WTC11 (cell line): ENCODE measurements at regions of chr1 and their contacts with region 1.

Region 1: DNA sequence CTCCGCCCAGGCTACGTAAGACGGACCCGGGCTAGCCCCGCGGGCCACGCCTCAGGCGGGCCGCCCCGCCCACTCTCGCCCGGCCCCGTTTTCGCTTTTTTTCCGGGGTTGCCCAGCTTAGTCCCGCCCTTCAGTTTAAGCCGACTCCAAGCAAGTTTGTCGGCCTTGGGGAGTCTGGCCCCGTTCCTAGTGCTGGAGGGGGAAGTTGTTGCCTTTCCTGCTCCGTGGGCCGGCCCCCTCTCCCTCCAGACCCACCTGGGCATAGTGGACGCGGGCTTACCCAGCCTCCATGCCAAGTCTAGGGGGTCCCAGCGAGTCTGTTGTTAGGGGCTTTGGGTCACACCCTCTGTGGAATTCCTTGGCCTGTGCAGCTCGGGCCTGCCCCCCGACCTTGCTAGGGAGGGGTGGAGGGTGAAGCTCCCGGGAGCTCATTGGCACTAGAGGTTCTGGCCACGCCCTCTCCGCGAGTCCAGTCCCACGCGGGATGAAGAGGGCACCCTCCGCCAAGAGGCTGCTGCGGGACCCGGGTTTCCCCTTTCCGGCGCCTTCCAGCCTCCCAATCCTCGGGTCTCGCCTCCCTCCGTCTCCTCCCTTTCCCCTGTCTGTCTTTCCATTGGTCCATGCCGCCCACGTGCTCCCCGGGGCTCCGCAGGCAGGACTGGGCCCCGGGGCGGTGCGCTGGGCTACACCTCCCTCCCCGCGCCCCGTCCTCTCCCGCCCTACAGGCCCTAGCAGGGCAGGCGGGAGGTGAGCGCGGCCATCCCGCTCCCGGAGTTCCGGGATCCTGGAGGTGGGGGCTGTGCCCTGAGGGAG is 3.3 kb downstream of the RUSC1 start:
- DNase-seq: peak; percentile 92
- ATAC-seq: peak; percentile 63
- H3K4me3 Mint-ChIP-seq: peak overlapping the region; percentile 91
- H3K27ac Mint-ChIP-seq: peak overlapping the region; percentile 65; the same call in 1 of the 2 replicates
- H3K4me1 Mint-ChIP-seq: peaks cover 38% of the 10 kb centered on the region
- H3K27me3 Mint-ChIP-seq: peaks cover 6% of the 10 kb centered on the region
- CTCF ChIP-seq: no peak

Region 2: GRCh38 chr1:154652893-154653292 is 671.1 kb before region 1 on chr1:
- CTCF ChIA-PET with region 1: no interaction called
- POLR2A ChIA-PET with region 1: no interaction called
- DNase-seq: no peak
- ATAC-seq: no peak
- H3K4me3 Mint-ChIP-seq: no peak overlapping the region
- H3K27ac Mint-ChIP-seq: no peak overlapping the region
- H3K4me1 Mint-ChIP-seq: peaks cover 7% of the 10 kb centered on the region
- H3K27me3 Mint-ChIP-seq: no peaks in the 10 kb centered on the region
- CTCF ChIP-seq: no peak

Region 3: GRCh38 chr1:155208541-155209311 is 115.3 kb before region 1 on chr1 and contains the start of gene MTX1:
- CTCF ChIA-PET with region 1: interaction called, 24 read pairs
- POLR2A ChIA-PET with region 1: interaction called, 4 read pairs
- DNase-seq: peak; percentile 88
- ATAC-seq: peak; percentile 65
- H3K4me3 Mint-ChIP-seq: peak within 1 kb of the TSS; percentile 88
- H3K27ac Mint-ChIP-seq: peak within 1 kb of the TSS; percentile 89
- H3K4me1 Mint-ChIP-seq: peaks cover 19% of the 10 kb centered on the region
- H3K27me3 Mint-ChIP-seq: peaks cover 7% of the 10 kb centered on the region; the same call in 1 of the 2 replicates
- CTCF ChIP-seq: no peak
- total RNA-seq, gene MTX1: 57.5 to 62.8 TPM (median 60.4 TPM) in 3 replicates

Region 4: GRCh38 chr1:155227261-155228095 is 96.5 kb before region 1 on chr1:
- CTCF ChIA-PET with region 1: interaction called, 15 read pairs
- POLR2A ChIA-PET with region 1: no interaction called
- DNase-seq: peak; percentile 97
- ATAC-seq: peak; percentile 96
- H3K4me3 Mint-ChIP-seq: peak overlapping the region; percentile 92
- H3K27ac Mint-ChIP-seq: peak overlapping the region; percentile 97
- H3K4me1 Mint-ChIP-seq: peaks cover 22% of the 10 kb centered on the region
- H3K27me3 Mint-ChIP-seq: peaks cover 29% of the 10 kb centered on the region
- CTCF ChIP-seq: no peak

Region 5: DNA sequence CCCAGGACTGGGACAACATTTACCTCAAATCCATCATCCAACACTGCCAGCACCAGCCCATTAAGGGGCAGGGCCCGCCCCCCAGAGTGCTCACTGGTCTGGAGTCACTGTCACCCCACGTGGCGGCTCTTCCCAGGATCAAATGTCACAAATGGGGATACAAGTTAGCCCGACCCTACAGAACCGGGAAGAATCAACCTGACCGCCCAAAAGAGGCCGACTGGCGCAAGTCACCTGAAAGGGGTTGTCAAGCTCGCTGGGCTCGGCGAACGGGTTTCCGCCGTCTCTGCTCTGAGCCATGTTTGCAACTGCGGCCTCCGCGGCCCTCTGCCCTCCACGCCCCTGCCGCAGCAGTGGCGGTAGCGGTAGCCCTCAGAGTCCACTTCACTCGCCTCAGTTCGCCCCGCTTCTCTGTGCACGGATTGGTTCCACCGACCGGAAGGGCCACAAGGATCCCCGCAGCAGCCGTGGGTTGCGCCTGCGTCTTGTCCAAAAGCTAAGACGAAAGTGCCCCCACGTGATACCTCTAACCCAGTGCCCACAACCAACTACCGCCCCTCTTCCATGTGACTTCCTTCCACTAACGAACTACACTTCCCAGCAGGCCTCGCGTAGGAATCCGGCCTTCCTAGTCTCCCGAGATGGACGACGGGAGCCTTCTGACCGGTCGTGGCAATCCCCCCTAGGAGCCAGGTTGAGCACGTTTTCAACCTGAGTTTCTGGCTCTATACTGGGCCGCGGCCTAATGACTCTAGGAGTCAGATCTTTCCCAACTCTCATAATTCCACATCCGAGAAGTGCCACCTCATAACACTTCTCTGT is 61.9 kb before region 1 on chr1 and contains the start of gene SCAMP3:
- CTCF ChIA-PET with region 1: interaction called, 13 read pairs
- POLR2A ChIA-PET with region 1: interaction called, 3 read pairs
- DNase-seq: peak; percentile 92
- ATAC-seq: peak; percentile 94
- H3K4me3 Mint-ChIP-seq: peak within 1 kb of the TSS; percentile 96
- H3K27ac Mint-ChIP-seq: peak within 1 kb of the TSS; percentile 97
- H3K4me1 Mint-ChIP-seq: peaks cover 14% of the 10 kb centered on the region
- H3K27me3 Mint-ChIP-seq: no peaks in the 10 kb centered on the region
- CTCF ChIP-seq: no peak
- total RNA-seq, gene SCAMP3: 50.0 to 58.8 TPM (median 52.2 TPM) in 3 replicates

Region 6: GRCh38 chr1:155277070-155277895 is 46.7 kb before region 1 on chr1 and contains the start of gene HCN3:
- CTCF ChIA-PET with region 1: interaction called, 75 read pairs
- POLR2A ChIA-PET with region 1: interaction called, 13 read pairs
- DNase-seq: peak; percentile 100
- ATAC-seq: peak; percentile 68
- H3K4me3 Mint-ChIP-seq: peak within 1 kb of the TSS; percentile 68
- H3K27ac Mint-ChIP-seq: no peak within 1 kb of the TSS
- H3K4me1 Mint-ChIP-seq: peaks cover 32% of the 10 kb centered on the region
- H3K27me3 Mint-ChIP-seq: peaks cover 18% of the 10 kb centered on the region
- CTCF ChIP-seq: peak; percentile 35; the same call in 1 of the 2 replicates
- total RNA-seq, gene HCN3: 5.9 to 7.3 TPM (median 6.3 TPM) in 3 replicates

Region 7: DNA sequence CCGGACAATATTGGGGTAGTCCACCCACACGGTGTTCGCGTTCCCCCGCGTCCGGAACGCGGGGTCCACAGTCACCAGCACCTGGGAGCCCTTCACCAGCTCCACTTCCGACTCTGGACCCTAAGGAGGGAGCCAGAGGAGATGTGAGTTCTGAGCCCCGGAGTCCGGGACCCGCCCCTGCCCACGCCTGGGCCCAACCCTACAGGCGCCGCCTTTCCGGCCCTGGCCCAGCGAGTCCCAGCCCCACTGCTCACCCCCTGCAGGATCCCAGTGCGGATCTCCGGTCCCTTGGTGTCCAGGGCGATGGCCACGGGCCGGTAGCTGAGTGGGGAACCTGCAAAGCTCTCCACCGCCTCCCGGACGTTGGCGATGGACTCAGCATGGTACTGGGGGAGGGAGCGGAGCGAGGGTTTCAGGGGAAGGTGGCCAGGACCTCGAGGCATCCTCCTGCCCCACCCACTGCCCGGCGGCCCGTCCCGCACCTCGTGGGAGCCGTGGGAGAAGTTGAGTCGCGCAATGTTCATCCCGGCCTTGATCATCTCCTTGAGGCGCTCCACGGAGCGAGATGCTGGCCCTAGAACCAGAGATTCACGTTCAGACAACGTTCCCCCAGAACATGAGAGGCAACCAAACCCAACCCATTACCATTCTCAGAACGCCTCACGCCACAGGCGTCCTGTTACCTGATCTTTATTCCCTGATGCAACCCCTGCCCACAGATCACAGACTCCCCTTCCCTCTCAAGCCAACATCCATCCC is 28.6 kb before region 1 on chr1:
- CTCF ChIA-PET with region 1: interaction called, 12 read pairs
- POLR2A ChIA-PET with region 1: no interaction called
- DNase-seq: peak; percentile 55
- ATAC-seq: peak; percentile 72
- H3K4me3 Mint-ChIP-seq: peak overlapping the region; percentile 78
- H3K27ac Mint-ChIP-seq: no peak overlapping the region
- H3K4me1 Mint-ChIP-seq: peaks cover 29% of the 10 kb centered on the region
- H3K27me3 Mint-ChIP-seq: peaks cover 49% of the 10 kb centered on the region
- CTCF ChIP-seq: no peak

Region 8: DNA sequence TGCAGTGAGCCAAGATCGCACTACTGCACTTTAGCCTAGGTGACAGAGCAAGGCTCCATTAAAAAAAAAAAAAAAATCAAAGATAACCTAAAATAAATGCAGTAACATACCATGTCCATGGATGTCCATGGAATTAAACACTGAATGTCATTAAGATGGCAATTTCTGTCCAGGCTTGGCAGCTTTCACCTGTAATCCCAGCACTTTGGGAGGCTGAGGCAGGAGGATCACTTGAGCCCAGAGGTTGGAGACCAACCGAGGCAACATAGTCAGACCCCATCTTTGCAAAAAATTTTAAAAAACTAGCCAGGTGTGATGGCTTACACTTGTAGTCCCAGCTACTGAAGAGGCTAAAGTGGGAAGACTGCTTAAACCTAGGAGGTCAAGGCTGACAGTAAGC is 96.8 kb after region 1 on chr1:
- CTCF ChIA-PET with region 1: no interaction called
- POLR2A ChIA-PET with region 1: no interaction called
- DNase-seq: no peak
- ATAC-seq: no peak
- H3K4me3 Mint-ChIP-seq: no peak overlapping the region
- H3K27ac Mint-ChIP-seq: no peak overlapping the region
- H3K4me1 Mint-ChIP-seq: no peaks in the 10 kb centered on the region
- H3K27me3 Mint-ChIP-seq: no peaks in the 10 kb centered on the region
- CTCF ChIP-seq: no peak

Region 9: GRCh38 chr1:155562581-155563376 is 238.8 kb after region 1 on chr1 and contains the start of gene ASH1L:
- CTCF ChIA-PET with region 1: no interaction called
- POLR2A ChIA-PET with region 1: no interaction called
- DNase-seq: peak; percentile 92
- ATAC-seq: peak; percentile 83
- H3K4me3 Mint-ChIP-seq: peak within 1 kb of the TSS; percentile 99
- H3K27ac Mint-ChIP-seq: peak within 1 kb of the TSS; percentile 99
- H3K4me1 Mint-ChIP-seq: peaks cover 17% of the 10 kb centered on the region
- H3K27me3 Mint-ChIP-seq: no peaks in the 10 kb centered on the region
- CTCF ChIP-seq: no peak
- total RNA-seq, gene ASH1L: 26.6 to 29.3 TPM (median 27.0 TPM) in 3 replicates